Naive thymus-derived CD4-positive, alpha-beta T cell (primary cell): ENCODE measurements at regions of chr19 and their contacts with region 1.

Region 1: DNA sequence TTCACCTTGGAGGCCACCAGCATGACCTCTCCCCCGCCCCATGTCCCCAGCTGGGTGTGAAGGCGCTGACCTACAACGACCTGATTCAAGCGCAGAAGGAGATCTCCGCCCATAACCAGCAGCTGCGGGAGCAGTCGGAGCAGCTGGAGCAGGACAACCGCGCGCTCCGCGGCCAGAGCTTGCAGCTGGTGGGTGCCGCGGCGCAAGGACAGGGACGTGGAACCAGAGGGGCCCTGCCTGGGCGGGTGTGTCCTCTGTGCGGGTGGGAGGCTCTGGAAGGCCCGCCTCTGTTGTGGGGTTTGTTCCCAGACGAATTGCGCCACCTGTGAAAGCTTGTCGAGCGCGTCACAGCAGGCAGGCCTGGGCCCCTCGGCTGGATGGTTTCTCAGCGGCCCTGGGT is 22.3 kb downstream of the PLEKHJ1 start:
- DNase-seq: no peak
- ATAC-seq: no peak
- H3K4me3 ChIP-seq: no peak overlapping the region
- H3K4me3 Mint-ChIP-seq: no peak overlapping the region
- H3K27ac ChIP-seq: no peak overlapping the region
- H3K27ac Mint-ChIP-seq: no peak overlapping the region
- H3K4me1 ChIP-seq: no peaks in the 10 kb centered on the region
- H3K4me1 Mint-ChIP-seq: peaks cover 5 to 18% (median 16%) of the 10 kb centered on the region in 7 donors
- H3K27me3 ChIP-seq: no peaks in the 10 kb centered on the region
- H3K27me3 Mint-ChIP-seq: no peaks in the 10 kb centered on the region

Region 2: GRCh38 chr19:2157452-2157851 is 56.3 kb before region 1 on chr19:
- CTCF ChIA-PET with region 1: no interaction called
- POLR2A ChIA-PET with region 1: no interaction called
- intact Hi-C with region 1: loop called in 1 of 2 experiments (anchors 2 kb)
- DNase-seq: no peak
- ATAC-seq: no peak
- H3K4me3 ChIP-seq: no peak overlapping the region
- H3K4me3 Mint-ChIP-seq: no peak overlapping the region
- H3K27ac ChIP-seq: no peak overlapping the region
- H3K27ac Mint-ChIP-seq: peak overlapping the region in 2 of 9 donors; percentile 38 to 79
- H3K4me1 ChIP-seq: no peaks in the 10 kb centered on the region
- H3K4me1 Mint-ChIP-seq: peaks cover 0 to 13% (median 4%) of the 10 kb centered on the region in 7 donors
- H3K27me3 ChIP-seq: no peaks in the 10 kb centered on the region
- H3K27me3 Mint-ChIP-seq: no peaks in the 10 kb centered on the region